Mammary epithelial cell (primary cell): ENCODE measurements at regions of chr10 and their contacts with region 1.

Region 1: DNA sequence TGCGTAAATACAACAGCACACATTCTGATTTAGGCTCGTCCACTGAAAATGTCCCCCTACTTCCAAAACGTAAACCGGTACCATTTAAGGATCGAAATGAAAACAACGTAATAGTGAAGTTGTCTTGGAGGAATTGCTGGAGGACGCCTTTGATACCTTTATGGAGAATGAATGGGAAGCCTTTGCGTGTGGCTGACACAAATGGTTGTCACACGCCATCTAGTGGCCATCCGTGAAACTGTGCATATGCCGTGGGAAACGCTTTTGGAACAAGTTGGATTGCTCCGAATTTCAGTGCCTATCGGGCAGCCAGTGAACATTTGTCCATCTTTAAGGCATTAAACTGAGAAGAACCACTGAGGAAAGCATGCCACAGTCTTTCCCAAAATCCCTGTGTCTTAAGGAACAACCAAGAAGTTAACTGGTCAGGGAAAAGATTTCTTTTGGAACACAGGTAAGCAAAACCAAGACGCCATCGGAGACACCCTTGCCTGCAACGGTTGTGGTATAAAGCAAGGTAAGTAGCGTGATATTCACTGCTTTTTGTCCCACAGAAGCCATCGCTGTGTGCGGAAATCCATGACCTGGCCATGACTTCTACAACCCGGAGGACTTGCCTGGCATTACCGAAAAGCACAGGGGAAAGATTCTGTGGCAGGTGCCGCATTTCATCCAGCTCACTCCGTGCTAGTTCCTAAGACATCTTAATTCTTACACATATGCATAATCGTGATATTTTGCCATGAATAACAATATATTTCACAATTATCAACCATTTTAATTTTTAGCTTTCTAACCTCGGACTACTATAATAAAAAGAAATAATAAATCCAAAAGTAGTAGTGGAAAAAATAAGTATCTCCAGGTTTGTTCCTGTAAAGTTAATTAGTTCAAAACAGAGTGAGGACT is 100.6 kb downstream of the FAM204A start:
- DNase-seq: peak; percentile 71
- H3K4me3 ChIP-seq: no peak overlapping the region
- H3K27ac ChIP-seq: no peak overlapping the region
- H3K4me1 ChIP-seq: peaks cover 5% of the 10 kb centered on the region
- H3K27me3 ChIP-seq: peaks cover 2% of the 10 kb centered on the region
- CTCF ChIP-seq: peak; percentile 91 to 94

Region 2: GRCh38 chr10:117431160-117431559 is 810.3 kb before region 1 on chr10:
- CTCF ChIA-PET with region 1: no interaction called
- dilution Hi-C with region 1: no loop called
- in situ Hi-C with region 1: no loop called
- intact Hi-C with region 1: loop called (anchors 1 kb)
- DNase-seq: peak; percentile 60
- H3K4me3 ChIP-seq: no peak overlapping the region
- H3K27ac ChIP-seq: no peak overlapping the region
- H3K4me1 ChIP-seq: no peaks in the 10 kb centered on the region
- H3K27me3 ChIP-seq: no peaks in the 10 kb centered on the region
- CTCF ChIP-seq: peak; percentile 39 to 57

Region 3: DNA sequence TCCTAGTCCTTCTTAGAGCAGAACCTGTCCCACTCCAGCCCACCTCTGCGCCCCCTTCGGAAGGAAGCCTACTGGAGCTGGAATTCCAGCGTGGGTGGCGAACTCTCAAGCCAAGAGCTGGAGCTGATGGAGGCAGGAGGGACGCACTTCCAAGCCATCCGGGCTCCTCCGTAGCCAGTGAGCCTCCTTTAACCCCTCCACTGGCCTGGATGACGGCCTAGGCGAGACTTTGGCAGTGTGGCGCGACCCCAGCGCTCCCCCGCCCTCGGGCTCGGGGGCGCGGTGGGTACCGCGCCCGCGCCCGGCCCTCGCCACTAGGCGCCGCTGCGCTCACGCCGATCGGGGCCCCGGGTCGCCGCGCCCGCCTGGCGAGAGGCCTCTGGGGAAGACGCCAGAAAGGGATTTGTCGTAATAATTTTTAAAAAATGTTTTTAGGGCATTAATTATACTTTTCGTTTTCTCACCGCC is 704.0 kb before region 1 on chr10:
- CTCF ChIA-PET with region 1: no interaction called
- dilution Hi-C with region 1: no loop called
- in situ Hi-C with region 1: loop called in 1 of 2 experiments (anchors 10 kb)
- intact Hi-C with region 1: loop called (anchors 1 kb)
- DNase-seq: no peak
- H3K4me3 ChIP-seq: no peak overlapping the region
- H3K27ac ChIP-seq: no peak overlapping the region
- H3K4me1 ChIP-seq: peaks cover 12% of the 10 kb centered on the region
- H3K27me3 ChIP-seq: peaks cover 72% of the 10 kb centered on the region
- CTCF ChIP-seq: peak; percentile 44 to 55

Region 4: DNA sequence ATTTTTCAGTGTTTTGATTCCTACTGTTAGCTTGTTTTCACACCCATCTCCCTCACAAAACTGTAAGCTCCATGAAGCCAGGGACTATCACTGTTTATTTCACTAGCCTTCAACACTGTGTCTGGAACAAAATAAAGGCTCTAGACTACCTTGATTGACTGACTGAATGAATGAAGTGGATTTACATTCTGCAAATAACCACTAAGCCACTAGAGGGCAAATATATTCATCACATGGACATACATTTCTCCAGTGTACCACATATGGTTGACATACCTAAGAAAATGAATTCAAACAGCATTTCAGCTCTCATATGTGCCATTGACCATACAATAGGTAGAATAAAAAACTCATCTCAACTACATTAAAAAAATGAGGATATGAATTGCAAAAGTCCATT is 380.7 kb before region 1 on chr10:
- CTCF ChIA-PET with region 1: interaction called, 4 read pairs
- dilution Hi-C with region 1: no loop called
- in situ Hi-C with region 1: no loop called
- intact Hi-C with region 1: loop called (anchors 1 kb)
- DNase-seq: no peak
- H3K4me3 ChIP-seq: no peak overlapping the region
- H3K27ac ChIP-seq: no peak overlapping the region
- H3K4me1 ChIP-seq: no peaks in the 10 kb centered on the region
- H3K27me3 ChIP-seq: no peaks in the 10 kb centered on the region
- CTCF ChIP-seq: peak; percentile 41 to 56

Region 5: DNA sequence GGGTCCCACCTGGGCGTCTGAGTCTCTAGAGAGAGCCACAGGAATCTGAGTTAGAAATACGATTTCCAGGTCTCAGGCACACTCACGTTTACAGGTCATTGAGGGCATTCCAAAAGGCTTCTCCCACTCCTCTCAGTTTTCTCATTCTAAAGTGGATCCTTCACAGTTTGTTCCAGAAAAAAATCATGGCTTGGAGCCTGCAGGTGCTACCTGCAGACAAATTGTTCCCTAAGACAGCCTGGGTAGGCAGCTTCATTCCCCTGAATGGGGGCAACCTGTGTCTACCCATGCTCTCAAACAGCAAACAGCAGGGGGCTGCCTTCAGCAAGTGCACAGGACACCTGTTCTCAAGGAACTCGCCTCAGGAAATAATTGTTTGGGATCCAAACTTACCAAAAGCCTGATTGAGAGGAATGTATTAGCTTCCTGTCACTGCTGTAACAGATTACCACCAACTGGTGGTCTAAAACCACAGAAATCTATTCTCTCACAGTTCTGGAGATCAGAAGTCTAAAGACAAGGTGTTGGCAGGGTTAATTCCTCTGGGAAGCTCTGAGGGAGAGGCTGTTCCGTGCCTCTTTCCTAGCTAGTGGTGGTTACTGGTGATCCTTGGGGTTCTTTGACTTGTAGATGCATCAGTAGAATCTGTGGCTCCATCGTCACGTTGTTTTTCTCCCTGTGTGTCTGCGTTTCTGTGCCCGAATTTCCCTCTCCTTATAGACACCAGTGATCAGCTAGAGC is 312.0 kb before region 1 on chr10:
- CTCF ChIA-PET with region 1: no interaction called
- dilution Hi-C with region 1: no loop called
- in situ Hi-C with region 1: no loop called
- intact Hi-C with region 1: loop called (anchors 10 kb)
- DNase-seq: no peak
- H3K4me3 ChIP-seq: no peak overlapping the region
- H3K27ac ChIP-seq: no peak overlapping the region
- H3K4me1 ChIP-seq: no peaks in the 10 kb centered on the region
- H3K27me3 ChIP-seq: no peaks in the 10 kb centered on the region
- CTCF ChIP-seq: no peak

Region 6: GRCh38 chr10:118028619-118029018 is 212.9 kb before region 1 on chr10:
- CTCF ChIA-PET with region 1: no interaction called
- dilution Hi-C with region 1: no loop called
- in situ Hi-C with region 1: no loop called
- intact Hi-C with region 1: no loop called
- DNase-seq: no peak
- H3K4me3 ChIP-seq: no peak overlapping the region
- H3K27ac ChIP-seq: no peak overlapping the region
- H3K4me1 ChIP-seq: no peaks in the 10 kb centered on the region
- H3K27me3 ChIP-seq: no peaks in the 10 kb centered on the region
- CTCF ChIP-seq: no peak

Region 7: DNA sequence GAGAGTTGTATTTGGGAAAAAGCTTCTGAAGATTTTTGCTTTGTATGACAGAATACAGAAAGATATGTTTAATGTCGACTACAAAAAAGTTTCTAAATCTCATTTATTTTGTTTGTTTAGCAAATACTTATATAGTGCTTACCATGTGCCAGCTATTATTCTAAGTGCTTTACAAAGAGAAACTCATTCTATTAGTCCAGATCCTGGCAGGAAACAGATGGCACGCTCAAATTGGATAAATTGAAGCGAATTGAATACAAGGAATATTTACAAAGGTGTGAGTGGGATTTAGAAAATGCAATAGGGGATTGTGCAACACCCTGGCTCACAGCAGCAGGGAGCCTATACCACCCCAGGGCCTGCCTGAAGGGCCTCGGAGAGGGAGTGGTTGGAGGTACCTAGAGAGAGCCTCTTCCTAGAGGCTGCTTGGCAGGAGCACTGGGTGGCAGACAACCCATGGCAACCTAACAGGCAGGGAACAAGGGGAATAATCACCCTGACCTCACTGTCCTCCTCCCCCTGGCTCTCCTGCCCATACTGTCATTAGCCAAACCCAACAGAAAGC is 128.2 kb after region 1 on chr10:
- CTCF ChIA-PET with region 1: no interaction called
- dilution Hi-C with region 1: no loop called
- in situ Hi-C with region 1: no loop called
- intact Hi-C with region 1: no loop called
- DNase-seq: no peak
- H3K4me3 ChIP-seq: no peak overlapping the region
- H3K27ac ChIP-seq: no peak overlapping the region
- H3K4me1 ChIP-seq: peaks cover 11% of the 10 kb centered on the region
- H3K27me3 ChIP-seq: no peaks in the 10 kb centered on the region
- CTCF ChIP-seq: no peak

Region 8: DNA sequence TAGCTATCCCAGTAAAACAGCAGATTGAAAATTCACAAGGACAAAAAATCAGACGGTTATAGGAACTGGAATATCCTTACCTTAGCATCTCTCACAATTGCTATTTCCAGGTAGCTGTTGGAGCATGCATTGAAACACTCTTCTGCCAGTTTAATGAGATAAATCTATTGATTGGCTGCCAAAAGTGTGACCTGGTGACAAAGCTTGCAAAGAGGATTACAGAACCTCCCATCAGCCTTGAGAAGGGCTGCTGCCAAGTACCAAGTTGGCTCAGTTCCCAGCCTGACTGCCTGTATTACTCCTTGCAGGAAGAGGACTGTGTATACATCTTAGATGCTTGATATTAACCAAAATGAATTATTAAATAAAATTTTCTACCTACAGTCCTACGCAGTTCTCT is 348.9 kb after region 1 on chr10:
- CTCF ChIA-PET with region 1: no interaction called
- dilution Hi-C with region 1: no loop called
- in situ Hi-C with region 1: no loop called
- intact Hi-C with region 1: no loop called
- DNase-seq: peak; percentile 45
- H3K4me3 ChIP-seq: no peak overlapping the region
- H3K27ac ChIP-seq: no peak overlapping the region
- H3K4me1 ChIP-seq: peaks cover 6% of the 10 kb centered on the region
- H3K27me3 ChIP-seq: peaks cover 11% of the 10 kb centered on the region
- CTCF ChIP-seq: no peak